Activated T-helper 2 cell treated with anti-CD3 and anti-CD28 coated beads, Interferon-gamma antibody, Interleukin-2, Interleukin-4, amounts not matched to agents 10 μg/mL and 5 μg/mL and 100 μg/mL, durations not matched to agents 14 hours and 24 hours and 36 hours (primary cell): ENCODE measurements at regions of chr13 and their contacts with region 1.

Region 1: GRCh38 chr13:27449936-27450828 is at the start of gene MTIF3:
- DNase-seq: peak; percentile 96
- H3K4me3 Mint-ChIP-seq: peak within 1 kb of the TSS; percentile 92
- H3K27ac Mint-ChIP-seq: peak within 1 kb of the TSS; percentile 94
- H3K4me1 Mint-ChIP-seq: peaks cover 45% of the 10 kb centered on the region
- H3K27me3 Mint-ChIP-seq: no peaks in the 10 kb centered on the region
- total RNA-seq, gene MTIF3: 25.0 and 32.0 TPM in 2 replicates

Region 2: GRCh38 chr13:27211771-27212364 is 238.3 kb before region 1 on chr13:
- intact Hi-C with region 1: no loop called
- DNase-seq: no peak
- H3K4me3 Mint-ChIP-seq: no peak overlapping the region
- H3K27ac Mint-ChIP-seq: no peak overlapping the region
- H3K4me1 Mint-ChIP-seq: no peaks in the 10 kb centered on the region
- H3K27me3 Mint-ChIP-seq: no peaks in the 10 kb centered on the region

Region 3: DNA sequence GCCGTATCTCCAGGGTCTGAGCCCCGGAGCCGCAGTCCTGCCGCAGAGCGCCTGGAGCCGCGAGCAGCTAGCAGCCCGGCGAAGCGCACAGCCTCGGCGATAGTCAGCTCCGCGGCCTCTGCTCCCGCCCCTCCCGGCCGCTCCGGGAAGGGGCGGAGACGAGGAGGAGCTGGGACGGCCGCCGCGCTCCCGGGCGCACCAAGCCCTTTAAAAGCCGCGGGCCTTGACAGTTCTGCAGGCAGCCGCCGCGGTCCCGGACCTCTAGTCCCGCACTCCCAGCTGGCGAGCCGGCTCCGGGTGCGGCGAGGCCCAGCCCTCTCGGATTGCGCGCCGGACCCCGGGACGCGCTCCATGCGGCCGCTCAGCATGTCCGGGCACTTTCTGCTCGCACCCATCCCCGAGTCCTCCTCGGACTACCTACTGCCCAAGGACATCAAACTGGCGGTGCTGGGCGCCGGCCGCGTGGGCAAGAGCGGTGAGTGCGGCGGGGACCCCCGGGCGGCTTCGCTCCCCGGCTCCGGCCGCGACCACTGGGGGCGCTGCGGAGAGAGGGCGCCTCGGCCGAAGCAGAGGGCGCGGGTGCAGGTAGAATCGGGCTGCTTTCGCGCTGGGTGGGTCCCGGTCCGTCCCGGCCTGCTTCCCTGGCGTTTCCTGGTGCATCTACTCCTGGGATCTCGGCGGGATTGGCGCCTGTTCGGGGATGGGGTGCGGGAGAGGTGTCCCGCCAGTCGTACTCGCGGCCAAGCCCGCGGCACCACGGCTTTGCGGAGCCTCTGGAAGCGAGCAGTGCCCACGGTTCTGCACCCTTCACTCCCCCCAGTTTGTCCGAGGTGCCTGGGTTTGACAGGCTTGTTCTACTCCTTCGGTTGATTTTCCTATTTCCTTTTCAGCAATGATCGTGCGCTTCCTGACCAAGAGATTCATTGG is 179.3 kb before region 1 on chr13 and contains the start of gene RASL11A:
- intact Hi-C with region 1: no loop called
- DNase-seq: peak; percentile 60
- H3K4me3 Mint-ChIP-seq: peak within 1 kb of the TSS; percentile 88
- H3K27ac Mint-ChIP-seq: peak within 1 kb of the TSS; percentile 61
- H3K4me1 Mint-ChIP-seq: peaks cover 10% of the 10 kb centered on the region
- H3K27me3 Mint-ChIP-seq: peaks cover 44% of the 10 kb centered on the region
- total RNA-seq, gene RASL11A: 1.3 and 1.7 TPM in 2 replicates

Region 4: DNA sequence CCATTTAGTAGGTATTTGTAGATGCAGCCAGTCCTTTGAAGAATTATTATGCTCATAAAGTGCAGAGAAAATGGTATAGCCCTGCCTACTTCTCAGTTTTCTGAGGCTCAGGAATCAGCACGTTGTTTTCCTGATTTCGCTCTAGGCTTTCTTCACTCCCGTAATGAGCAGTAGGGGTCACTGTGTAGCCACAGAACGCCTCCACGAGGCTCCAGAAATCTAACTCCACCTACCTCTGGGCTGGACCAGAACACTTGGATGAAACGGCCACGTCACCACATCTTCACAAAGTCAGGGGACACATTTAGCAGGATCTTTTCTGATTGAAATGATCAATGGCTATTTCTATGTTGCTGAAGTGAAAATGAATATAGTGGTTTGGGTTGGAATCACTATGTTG is 75.5 kb before region 1 on chr13:
- intact Hi-C with region 1: loop called (anchors 2 kb)
- DNase-seq: peak; percentile 39
- H3K4me3 Mint-ChIP-seq: no peak overlapping the region
- H3K27ac Mint-ChIP-seq: no peak overlapping the region
- H3K4me1 Mint-ChIP-seq: peaks cover 17% of the 10 kb centered on the region
- H3K27me3 Mint-ChIP-seq: peaks cover 17% of the 10 kb centered on the region

Region 5: GRCh38 chr13:27406178-27406939 is 43.8 kb before region 1 on chr13:
- intact Hi-C with region 1: loop called (anchors 5 kb)
- DNase-seq: peak; percentile 25
- H3K4me3 Mint-ChIP-seq: no peak overlapping the region
- H3K27ac Mint-ChIP-seq: no peak overlapping the region
- H3K4me1 Mint-ChIP-seq: peaks cover 8% of the 10 kb centered on the region
- H3K27me3 Mint-ChIP-seq: peaks cover 23% of the 10 kb centered on the region

Region 6: GRCh38 chr13:27424246-27425157 is 25.7 kb before region 1 on chr13 and contains the start of gene GTF3A:
- intact Hi-C with region 1: loop called (anchors 1 kb)
- DNase-seq: peak; percentile 86
- H3K4me3 Mint-ChIP-seq: peak within 1 kb of the TSS; percentile 89
- H3K27ac Mint-ChIP-seq: peak within 1 kb of the TSS; percentile 94
- H3K4me1 Mint-ChIP-seq: peaks cover 36% of the 10 kb centered on the region
- H3K27me3 Mint-ChIP-seq: no peaks in the 10 kb centered on the region
- total RNA-seq, gene GTF3A: 251 and 253 TPM in 2 replicates

Region 7: GRCh38 chr13:27461940-27462584 is 11.9 kb after region 1 on chr13:
- intact Hi-C with region 1: no loop called
- DNase-seq: no peak
- H3K4me3 Mint-ChIP-seq: no peak overlapping the region
- H3K27ac Mint-ChIP-seq: no peak overlapping the region
- H3K4me1 Mint-ChIP-seq: peaks cover 5% of the 10 kb centered on the region
- H3K27me3 Mint-ChIP-seq: no peaks in the 10 kb centered on the region

Region 8: GRCh38 chr13:27620377-27621115 is 170.4 kb after region 1 on chr13 and contains the start of gene LNX2:
- intact Hi-C with region 1: loop called (anchors 1 kb)
- DNase-seq: peak; percentile 95
- H3K4me3 Mint-ChIP-seq: peak within 1 kb of the TSS; percentile 90
- H3K27ac Mint-ChIP-seq: peak within 1 kb of the TSS; percentile 88
- H3K4me1 Mint-ChIP-seq: peaks cover 47% of the 10 kb centered on the region
- H3K27me3 Mint-ChIP-seq: no peaks in the 10 kb centered on the region
- total RNA-seq, gene LNX2: 5.2 and 5.4 TPM in 2 replicates